Activated CD4-positive, alpha-beta T cell treated with anti-CD3 and anti-CD28 coated beads, Interleukin-2, amount 10 ng/mL, durations not matched to agents 24 days and 14 days (primary cell): ENCODE measurements at regions of chr1 and their contacts with region 1.

Region 1: DNA sequence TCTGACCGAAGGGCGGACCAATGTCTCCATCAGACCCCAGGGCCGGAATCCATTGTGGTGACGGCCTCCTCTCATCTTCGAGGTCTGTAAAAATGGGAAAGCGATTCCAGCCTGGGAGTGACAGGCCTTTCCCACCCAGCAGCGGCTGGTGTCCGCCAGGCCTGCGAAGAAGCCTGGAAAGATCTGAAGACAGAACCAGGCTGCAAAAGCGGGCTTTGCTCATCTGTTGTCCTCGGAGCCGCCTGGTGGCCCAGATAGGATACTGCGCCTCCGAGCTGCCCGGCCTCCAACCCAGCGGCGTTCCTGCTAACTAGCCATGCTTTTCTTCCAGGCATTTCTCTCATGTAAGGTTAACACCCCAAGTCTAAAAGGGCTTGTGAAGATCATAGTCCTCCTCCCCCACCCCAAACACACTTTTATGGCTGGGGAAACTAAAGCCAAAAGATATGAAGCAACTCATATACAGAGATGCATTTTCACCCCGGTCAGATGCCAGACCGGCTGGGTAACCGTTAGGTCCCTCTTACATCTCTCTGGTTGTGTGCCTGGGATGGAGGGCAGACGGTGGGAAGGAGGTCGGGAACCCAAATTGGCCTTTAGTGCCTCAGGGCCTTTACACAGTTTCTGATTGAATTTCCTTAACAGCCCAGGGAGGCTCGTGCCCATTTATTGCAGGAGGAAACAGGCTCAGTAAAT is 1.9 kb upstream of the DHRS3 start:
- DNase-seq: peak; percentile 94
- H3K4me3 Mint-ChIP-seq: peak overlapping the region; percentile 99
- H3K27ac Mint-ChIP-seq: peak overlapping the region; percentile 75
- H3K4me1 Mint-ChIP-seq: peaks cover 47% of the 10 kb centered on the region
- H3K27me3 Mint-ChIP-seq: no peaks in the 10 kb centered on the region

Region 2: DNA sequence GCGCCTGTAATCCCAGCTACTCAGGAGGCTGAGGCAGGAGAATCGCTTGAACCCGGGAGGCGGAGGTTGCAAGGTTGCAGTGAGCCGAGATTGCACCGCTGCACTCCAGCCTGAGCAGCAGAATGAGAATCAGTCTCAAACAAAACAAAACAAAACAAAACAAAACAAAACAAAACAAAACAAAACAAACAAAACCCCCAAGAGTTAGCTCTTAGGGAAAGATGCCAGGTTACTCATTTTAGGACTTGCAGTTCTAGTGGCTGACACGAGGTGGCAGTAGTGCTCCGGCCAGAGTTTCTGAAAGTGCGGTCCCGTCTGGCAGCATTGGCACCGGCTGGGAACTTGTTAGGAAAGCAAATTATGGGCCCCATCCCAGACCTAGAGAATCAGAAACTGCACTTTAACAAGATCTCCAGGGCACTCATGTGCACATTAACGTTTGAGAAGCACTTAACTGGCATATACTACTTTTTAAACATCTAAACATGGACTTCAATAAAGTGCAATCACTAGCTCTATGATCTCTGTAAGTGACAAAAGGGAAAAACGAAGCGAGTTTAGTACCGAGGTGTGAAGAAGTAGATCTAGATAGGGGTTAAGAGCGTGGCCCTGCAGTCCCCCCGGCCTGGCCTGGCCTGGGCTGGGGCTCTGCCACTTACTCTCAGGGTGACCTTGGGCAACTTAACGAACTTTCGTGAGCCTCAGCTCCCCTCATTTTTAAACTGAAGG is 495.1 kb before region 1 on chr1:
- intact Hi-C with region 1: loop called (anchors 10 kb)
- DNase-seq: peak; percentile 94
- H3K4me3 Mint-ChIP-seq: peak overlapping the region; percentile 38
- H3K27ac Mint-ChIP-seq: peak overlapping the region; percentile 49
- H3K4me1 Mint-ChIP-seq: peaks cover 35% of the 10 kb centered on the region
- H3K27me3 Mint-ChIP-seq: no peaks in the 10 kb centered on the region

Region 3: DNA sequence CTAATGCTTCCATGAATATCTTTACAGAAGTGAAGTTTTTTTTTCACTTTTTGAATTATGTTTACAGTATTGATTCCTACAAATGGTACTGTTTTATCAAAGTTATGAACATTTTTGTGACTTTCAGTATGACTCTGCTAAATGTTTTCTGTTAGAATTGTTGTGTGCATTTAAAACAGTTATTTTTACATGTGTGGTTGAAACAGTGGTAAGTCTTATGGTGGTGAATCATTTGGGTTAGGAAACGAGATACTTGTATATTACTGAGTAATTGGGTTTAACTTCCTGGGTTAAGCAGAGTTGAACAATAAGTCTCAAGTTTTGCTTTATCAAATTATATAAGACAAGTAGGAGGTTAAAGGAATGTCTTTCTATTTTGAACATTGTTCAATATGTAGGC is 323.3 kb before region 1 on chr1:
- intact Hi-C with region 1: loop called (anchors 1 kb)
- DNase-seq: no peak
- H3K4me3 Mint-ChIP-seq: peak overlapping the region; percentile 33
- H3K27ac Mint-ChIP-seq: peak overlapping the region; percentile 69
- H3K4me1 Mint-ChIP-seq: peaks cover 26% of the 10 kb centered on the region
- H3K27me3 Mint-ChIP-seq: no peaks in the 10 kb centered on the region

Region 4: DNA sequence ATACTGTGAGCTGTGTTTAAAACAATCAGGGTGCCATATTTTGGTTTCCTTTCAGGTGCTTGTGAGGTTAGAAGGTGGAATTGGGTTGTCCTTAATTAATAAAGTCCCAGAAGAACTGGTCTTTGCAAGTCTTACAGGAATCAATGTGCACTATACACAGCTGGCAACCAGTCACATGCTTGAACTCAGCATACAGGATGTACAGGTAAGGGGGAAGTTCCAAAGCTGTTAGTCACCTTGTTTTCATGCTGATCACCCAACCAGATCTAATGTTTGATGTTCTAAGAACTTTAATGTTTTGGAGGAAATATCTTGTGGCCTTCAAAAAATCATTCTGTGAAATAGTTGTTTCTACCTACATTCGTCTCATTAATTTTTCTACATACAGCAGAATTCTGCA is 233.8 kb before region 1 on chr1:
- intact Hi-C with region 1: loop called (anchors 5 kb)
- DNase-seq: peak; percentile 68
- H3K4me3 Mint-ChIP-seq: peak overlapping the region; percentile 55
- H3K27ac Mint-ChIP-seq: peak overlapping the region; percentile 50
- H3K4me1 Mint-ChIP-seq: peaks cover 51% of the 10 kb centered on the region
- H3K27me3 Mint-ChIP-seq: no peaks in the 10 kb centered on the region

Region 5: DNA sequence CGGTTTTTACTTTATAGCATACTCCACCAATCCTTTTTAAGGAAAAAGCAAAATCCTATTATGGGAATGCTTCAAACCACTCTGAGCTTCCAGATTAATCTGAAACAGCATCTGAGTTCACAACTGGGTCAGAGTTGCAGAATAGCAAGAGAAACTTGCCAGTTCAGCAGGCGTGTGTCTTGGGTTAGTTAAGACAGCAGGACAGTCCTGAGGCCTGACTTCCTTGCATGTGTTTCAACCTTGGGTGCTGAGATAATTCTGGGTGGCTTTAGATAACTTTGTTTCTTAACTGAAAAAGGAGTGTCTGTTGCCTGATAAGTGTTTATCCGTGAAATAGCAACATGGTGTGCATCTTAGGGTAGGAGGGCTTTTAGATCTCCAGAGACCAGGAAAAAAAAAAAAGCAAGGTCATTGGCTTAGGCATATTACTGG is 171.2 kb before region 1 on chr1:
- intact Hi-C with region 1: loop called (anchors 1 kb)
- DNase-seq: no peak
- H3K4me3 Mint-ChIP-seq: peak overlapping the region; percentile 80
- H3K27ac Mint-ChIP-seq: peak overlapping the region; percentile 94
- H3K4me1 Mint-ChIP-seq: peaks cover 61% of the 10 kb centered on the region
- H3K27me3 Mint-ChIP-seq: peaks cover 4% of the 10 kb centered on the region

Region 6: GRCh38 chr1:12565094-12565965 is 54.6 kb before region 1 on chr1:
- intact Hi-C with region 1: loop called (anchors 5 kb)
- DNase-seq: no peak
- H3K4me3 Mint-ChIP-seq: no peak overlapping the region
- H3K27ac Mint-ChIP-seq: no peak overlapping the region
- H3K4me1 Mint-ChIP-seq: no peaks in the 10 kb centered on the region
- H3K27me3 Mint-ChIP-seq: no peaks in the 10 kb centered on the region

Region 7: GRCh38 chr1:12649971-12650421 is 30.1 kb after region 1 on chr1:
- intact Hi-C with region 1: no loop called
- DNase-seq: no peak
- H3K4me3 Mint-ChIP-seq: no peak overlapping the region
- H3K27ac Mint-ChIP-seq: no peak overlapping the region
- H3K4me1 Mint-ChIP-seq: no peaks in the 10 kb centered on the region
- H3K27me3 Mint-ChIP-seq: peaks cover 22% of the 10 kb centered on the region

Region 8: GRCh38 chr1:12677565-12677964 is 57.6 kb after region 1 on chr1:
- intact Hi-C with region 1: no loop called
- DNase-seq: no peak
- H3K4me3 Mint-ChIP-seq: no peak overlapping the region
- H3K27ac Mint-ChIP-seq: no peak overlapping the region
- H3K4me1 Mint-ChIP-seq: no peaks in the 10 kb centered on the region
- H3K27me3 Mint-ChIP-seq: peaks cover 16% of the 10 kb centered on the region